Naive thymus-derived CD4-positive, alpha-beta T cell (primary cell): ENCODE measurements at regions of chr20 and their contacts with region 1.

Region 1: GRCh38 chr20:47839200-47839599 is 53.9 kb upstream of the SULF2 start:
- DNase-seq: no peak
- ATAC-seq: no peak
- H3K4me3 ChIP-seq: no peak overlapping the region
- H3K4me3 Mint-ChIP-seq: no peak overlapping the region
- H3K27ac ChIP-seq: no peak overlapping the region
- H3K27ac Mint-ChIP-seq: no peak overlapping the region
- H3K4me1 ChIP-seq: no peaks in the 10 kb centered on the region
- H3K4me1 Mint-ChIP-seq: peaks cover 0 to 5% (median 0%) of the 10 kb centered on the region in 7 donors
- H3K27me3 ChIP-seq: no peaks in the 10 kb centered on the region
- H3K27me3 Mint-ChIP-seq: peaks cover 0 to 11% (median 0%) of the 10 kb centered on the region in 5 donors

Region 2: GRCh38 chr20:47886460-47887041 is 47.4 kb after region 1 on chr20:
- CTCF ChIA-PET with region 1: no interaction called
- POLR2A ChIA-PET with region 1: no interaction called
- intact Hi-C with region 1: loop called in 1 of 2 experiments (anchors 10 kb)
- DNase-seq: no peak
- ATAC-seq: no peak
- H3K4me3 ChIP-seq: no peak overlapping the region
- H3K4me3 Mint-ChIP-seq: no peak overlapping the region
- H3K27ac ChIP-seq: no peak overlapping the region
- H3K27ac Mint-ChIP-seq: no peak overlapping the region
- H3K4me1 ChIP-seq: no peaks in the 10 kb centered on the region
- H3K4me1 Mint-ChIP-seq: no peaks in the 10 kb centered on the region
- H3K27me3 ChIP-seq: no peaks in the 10 kb centered on the region
- H3K27me3 Mint-ChIP-seq: peaks cover 0 to 4% (median 0%) of the 10 kb centered on the region in 5 donors